Heart left ventricle (tissue), 16 donors: ENCODE measurements at regions of chr4 and their contacts with region 1.

Region 1: GRCh38 chr4:140427106-140427961 is at the start of gene CLGN:
- DNase-seq: peak; percentile 73 to 89 (median 81)
- ATAC-seq: peak; percentile 84 to 97 (median 94)
- H3K4me3 ChIP-seq: peak within 1 kb of the TSS; percentile 32 to 80 (median 66)
- H3K27ac ChIP-seq: peak within 1 kb of the TSS; percentile 66 to 91 (median 82)
- H3K4me1 ChIP-seq: peaks cover 0 to 21% (median 0%) of the 10 kb centered on the region in 12 donors
- H3K27me3 ChIP-seq: peaks cover 0 to 16% (median 6%) of the 10 kb centered on the region in 9 donors
- CTCF ChIP-seq: peak; percentile 15 to 73 (median 52)
- POLR2A ChIP-seq: peak in 1 of 2 donors; percentile 39
- total RNA-seq, gene CLGN: 52.6 to 86.4 (median 62.7) TPM

Region 2: DNA sequence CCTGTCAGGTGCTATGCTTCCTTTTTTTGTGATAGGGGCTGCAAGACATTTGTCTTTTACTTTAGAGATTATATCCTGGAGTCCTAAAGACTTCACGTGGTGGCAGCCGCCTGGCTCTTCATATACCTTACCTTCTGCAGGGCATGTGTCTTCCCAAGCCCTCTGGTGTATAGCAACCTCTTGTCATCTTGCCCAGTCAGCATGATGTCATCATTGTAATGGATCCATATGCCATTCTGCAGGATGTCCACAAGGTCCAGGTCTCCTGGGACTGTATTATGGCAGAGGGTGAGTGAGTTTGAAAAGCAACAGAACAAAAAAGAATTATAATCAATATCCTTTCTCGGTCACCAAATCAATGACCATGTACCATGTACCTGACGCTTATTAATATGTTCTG is 136.1 kb before region 1 on chr4:
- intact Hi-C with region 1: no loop called
- DNase-seq: no peak
- ATAC-seq: no peak
- H3K4me3 ChIP-seq: no peak overlapping the region
- H3K27ac ChIP-seq: no peak overlapping the region
- H3K4me1 ChIP-seq: peaks cover 0 to 4% (median 0%) of the 10 kb centered on the region in 12 donors
- H3K27me3 ChIP-seq: no peaks in the 10 kb centered on the region
- CTCF ChIP-seq: no peak
- POLR2A ChIP-seq: no peak

Region 3: DNA sequence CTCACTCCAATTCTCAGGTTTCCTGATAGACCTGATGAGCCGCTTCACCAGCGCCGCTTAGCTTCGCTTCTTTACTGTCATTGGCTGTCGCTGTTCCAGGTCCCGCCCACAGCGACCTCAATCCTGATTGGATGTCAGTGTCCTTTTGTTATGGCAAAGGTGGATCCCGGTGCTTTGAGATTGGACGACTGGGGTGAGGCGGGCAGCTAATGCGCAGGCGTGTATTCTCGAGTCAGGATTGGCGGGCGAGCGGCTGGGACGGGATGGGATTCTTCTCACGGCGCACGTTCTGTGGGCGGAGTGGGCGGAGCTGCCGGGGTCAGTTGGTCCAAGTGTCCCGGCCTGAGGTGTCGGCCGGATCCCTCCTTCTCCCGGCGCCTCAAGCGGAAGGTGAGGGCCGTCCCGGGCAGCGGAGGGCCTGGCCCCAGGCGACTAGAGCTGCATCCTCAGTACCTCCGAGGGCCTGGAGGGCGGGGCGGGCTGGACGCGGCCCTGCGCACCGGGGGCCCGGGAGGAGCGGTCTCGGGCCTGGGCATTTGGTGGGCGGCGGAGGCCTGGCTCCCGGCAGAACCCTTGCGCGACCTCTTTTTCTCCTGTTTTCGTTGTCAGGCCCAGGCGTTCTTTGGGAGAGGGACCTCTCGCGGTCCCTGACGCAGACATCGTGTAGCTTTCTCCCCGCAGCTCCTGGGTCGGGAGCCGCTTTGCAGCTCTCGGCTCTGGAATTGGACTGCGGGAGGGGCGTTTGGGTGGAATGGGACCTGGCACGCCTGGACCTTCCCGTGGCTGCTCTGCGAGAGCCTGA is 53.8 kb before region 1 on chr4 and contains the start of gene SCOC:
- intact Hi-C with region 1: loop called in 1 of 10 experiments (anchors 5 kb)
- DNase-seq: peak; percentile 99 to 100 (median 99)
- ATAC-seq: peak; percentile 98 to 99 (median 99)
- H3K4me3 ChIP-seq: peak within 1 kb of the TSS; percentile 77 to 96 (median 84)
- H3K27ac ChIP-seq: peak within 1 kb of the TSS; percentile 76 to 96 (median 94)
- H3K4me1 ChIP-seq: peaks cover 0 to 52% (median 31%) of the 10 kb centered on the region in 12 donors
- H3K27me3 ChIP-seq: no peaks in the 10 kb centered on the region
- CTCF ChIP-seq: peak in 1 of 12 donors; percentile 9
- POLR2A ChIP-seq: peak in 1 of 2 donors; percentile 74
- total RNA-seq, gene SCOC: 61.0 to 80.9 (median 70.3) TPM

Region 4: GRCh38 chr4:140388015-140388414 is 39.3 kb before region 1 on chr4:
- intact Hi-C with region 1: loop called in 1 of 10 experiments (anchors 5 kb)
- DNase-seq: no peak
- ATAC-seq: peak; percentile 44 to 72 (median 67)
- H3K4me3 ChIP-seq: no peak overlapping the region
- H3K27ac ChIP-seq: peak overlapping the region in 3 of 12 donors; percentile 11 to 18 (median 13)
- H3K4me1 ChIP-seq: peaks cover 0 to 7% (median 0%) of the 10 kb centered on the region in 12 donors
- H3K27me3 ChIP-seq: no peaks in the 10 kb centered on the region
- CTCF ChIP-seq: no peak
- POLR2A ChIP-seq: no peak

Region 5: DNA sequence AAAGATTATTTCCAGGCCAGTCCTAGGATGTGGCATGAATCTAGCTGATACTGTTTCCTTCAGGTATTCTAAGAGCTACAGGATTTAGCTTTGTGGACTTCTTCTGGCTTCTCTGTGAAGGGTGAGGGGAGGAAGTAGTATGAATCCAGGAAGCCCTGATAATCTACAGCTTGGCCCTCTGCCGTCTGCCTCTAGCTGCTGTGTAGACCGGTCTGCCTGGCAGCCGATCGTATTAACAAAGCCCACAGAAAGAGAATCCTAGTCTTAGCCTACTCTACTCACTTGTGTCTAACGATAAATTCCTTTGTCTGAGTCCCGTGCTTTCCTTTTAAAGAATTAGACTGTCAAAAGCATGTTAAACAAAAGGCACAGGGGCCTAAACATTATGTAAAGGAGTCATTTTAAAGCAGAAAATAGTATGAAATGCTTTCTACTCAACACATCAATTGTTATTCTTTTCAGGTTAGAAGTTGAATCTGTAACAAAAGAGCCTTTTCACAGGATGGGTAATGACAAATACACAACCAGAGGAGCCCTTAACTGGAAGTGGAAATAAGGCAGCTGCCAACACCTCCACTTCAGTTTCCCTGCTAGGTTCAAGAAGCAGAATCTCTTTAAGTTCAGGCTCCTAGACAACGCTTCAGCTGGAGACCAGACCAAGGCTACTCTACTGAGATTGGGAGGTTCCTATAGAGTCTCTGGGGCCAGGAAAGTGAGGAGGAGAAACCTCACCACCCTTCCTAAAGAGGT is 190.3 kb after region 1 on chr4:
- intact Hi-C with region 1: loop called in 1 of 10 experiments (anchors 5 kb)
- DNase-seq: no peak
- ATAC-seq: no peak
- H3K4me3 ChIP-seq: no peak overlapping the region
- H3K27ac ChIP-seq: no peak overlapping the region
- H3K4me1 ChIP-seq: peaks cover 0 to 11% (median 0%) of the 10 kb centered on the region in 12 donors
- H3K27me3 ChIP-seq: no peaks in the 10 kb centered on the region
- CTCF ChIP-seq: no peak
- POLR2A ChIP-seq: no peak